A673 (cell line): ENCODE measurements at regions of chr7 and their contacts with region 1.

Region 1: GRCh38 chr7:97006036-97006815 is 873 bp downstream of the DLX6 start:
- DNase-seq: peak; percentile 75
- H3K4me3 ChIP-seq: peak overlapping the region; percentile 57
- H3K27ac ChIP-seq: peak overlapping the region; percentile 81
- H3K4me1 ChIP-seq: peaks cover 25% of the 10 kb centered on the region
- H3K27me3 ChIP-seq: peaks cover 10% of the 10 kb centered on the region
- CTCF ChIP-seq: no peak

Region 2: GRCh38 chr7:96397936-96398598 is 608.2 kb before region 1 on chr7:
- CTCF ChIA-PET with region 1: no interaction called
- POLR2A ChIA-PET with region 1: no interaction called
- intact Hi-C with region 1: no loop called
- DNase-seq: no peak
- H3K4me3 ChIP-seq: no peak overlapping the region
- H3K27ac ChIP-seq: no peak overlapping the region
- H3K4me1 ChIP-seq: no peaks in the 10 kb centered on the region
- H3K27me3 ChIP-seq: no peaks in the 10 kb centered on the region
- CTCF ChIP-seq: no peak

Region 3: DNA sequence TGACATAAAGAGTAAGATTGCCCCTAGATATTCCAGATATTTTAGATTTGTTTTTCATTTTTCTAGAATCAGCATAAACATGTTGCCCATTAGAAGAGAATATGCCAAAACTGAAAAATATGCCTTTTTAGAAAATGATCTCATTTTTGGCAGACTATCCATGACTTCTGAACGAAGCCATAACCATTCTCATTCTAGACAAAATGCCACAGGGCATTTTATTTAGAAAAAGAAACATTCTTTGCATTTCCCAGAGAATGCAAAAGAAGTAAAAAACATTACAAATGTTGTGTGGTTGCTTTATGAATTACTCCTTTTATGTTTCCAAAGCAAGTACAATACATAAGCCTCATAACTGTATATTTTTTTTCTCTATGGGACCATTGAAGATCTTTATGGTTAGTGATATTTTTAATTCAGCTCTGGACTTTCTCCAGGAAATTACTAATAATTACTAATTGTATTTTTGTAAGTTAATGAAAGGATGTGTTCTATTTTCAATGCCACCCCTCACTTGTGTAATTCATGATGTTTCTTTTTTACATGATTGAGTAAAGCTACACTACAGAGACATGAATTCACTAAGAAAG is 187.0 kb before region 1 on chr7:
- CTCF ChIA-PET with region 1: no interaction called
- POLR2A ChIA-PET with region 1: no interaction called
- intact Hi-C with region 1: loop called (anchors 5 kb)
- DNase-seq: no peak
- H3K4me3 ChIP-seq: no peak overlapping the region
- H3K27ac ChIP-seq: no peak overlapping the region
- H3K4me1 ChIP-seq: peaks cover 20% of the 10 kb centered on the region
- H3K27me3 ChIP-seq: no peaks in the 10 kb centered on the region
- CTCF ChIP-seq: no peak

Region 4: GRCh38 chr7:96949766-96950165 is 56.5 kb before region 1 on chr7:
- CTCF ChIA-PET with region 1: no interaction called
- POLR2A ChIA-PET with region 1: no interaction called
- intact Hi-C with region 1: loop called (anchors 10 kb)
- DNase-seq: no peak
- H3K4me3 ChIP-seq: no peak overlapping the region
- H3K27ac ChIP-seq: no peak overlapping the region
- H3K4me1 ChIP-seq: no peaks in the 10 kb centered on the region
- H3K27me3 ChIP-seq: no peaks in the 10 kb centered on the region
- CTCF ChIP-seq: no peak